ENCODE measurements at regions of chr4 and their contacts with region 1.

Region 1: DNA sequence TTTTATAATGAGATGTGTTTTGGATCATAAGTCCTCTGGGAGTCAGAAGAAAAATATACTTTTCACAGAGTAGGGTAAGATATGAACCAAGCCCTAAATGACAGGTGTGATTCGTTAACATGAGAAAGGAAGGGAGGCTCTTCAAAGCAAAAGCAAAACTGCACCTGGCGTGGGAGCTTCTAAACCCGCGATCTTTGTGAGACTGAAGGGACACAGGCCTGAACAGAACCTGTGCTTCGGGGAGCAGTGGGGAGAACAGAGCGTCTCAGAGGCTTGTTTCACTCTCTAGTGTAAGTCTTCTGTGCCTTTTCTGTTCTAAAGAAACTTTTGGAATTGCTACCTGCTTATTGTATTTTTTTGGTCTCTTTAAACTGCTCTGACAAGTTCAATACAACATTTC is 30.2 kb upstream of the CYP4V2 start:
- DNase-seq: peak in 2 of 5 donors; percentile 14 to 21
- H3K4me3 ChIP-seq: no peak overlapping the region
- H3K4me3 Mint-ChIP-seq: peak overlapping the region; percentile 28 to 79 (median 69)
- H3K27ac ChIP-seq: no peak overlapping the region
- H3K27ac Mint-ChIP-seq: peak overlapping the region in 5 of 7 donors; percentile 19 to 90 (median 84)
- H3K4me1 ChIP-seq: peaks cover 9% of the 10 kb centered on the region
- H3K4me1 Mint-ChIP-seq: peaks cover 0 to 10% (median 5%) of the 10 kb centered on the region in 4 donors
- H3K27me3 ChIP-seq: no peaks in the 10 kb centered on the region
- H3K27me3 Mint-ChIP-seq: peaks cover 0 to 4% of the 10 kb centered on the region in 2 donors

Region 2: DNA sequence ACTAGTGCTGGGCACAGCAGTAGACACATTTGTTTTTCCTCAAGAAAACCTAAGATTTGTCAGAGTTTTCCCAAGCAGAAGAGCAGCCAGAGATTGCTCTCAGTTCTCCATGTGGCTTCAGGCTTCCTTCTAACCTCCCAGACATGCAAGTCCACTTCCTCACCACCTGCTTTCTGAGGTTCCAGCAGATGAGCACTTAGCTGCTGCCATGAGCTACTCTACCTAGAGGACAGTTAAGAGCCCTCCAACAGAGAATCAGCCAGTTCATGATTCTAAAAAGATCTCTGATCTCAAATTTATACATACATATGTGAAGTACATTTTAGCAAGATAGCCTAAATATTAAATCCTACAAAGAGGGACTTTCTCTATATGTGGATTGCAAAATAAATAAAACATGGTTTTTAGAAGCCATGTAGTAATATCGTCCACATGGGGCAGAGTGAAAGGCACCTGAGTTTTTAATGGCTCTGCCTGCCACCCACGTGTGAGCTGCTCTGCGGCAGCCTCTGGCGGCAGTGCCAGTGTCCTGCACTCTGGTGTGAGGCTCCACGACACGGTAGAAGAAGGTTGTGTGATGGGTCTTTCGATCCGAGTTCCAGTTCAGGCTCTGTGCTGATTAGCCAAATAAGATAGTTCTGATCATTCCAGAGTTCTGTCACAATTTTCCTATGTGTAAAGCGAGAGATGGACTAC is 40.5 kb after region 1 on chr4:
- CTCF ChIA-PET with region 1: no interaction called
- POLR2A ChIA-PET with region 1: no interaction called
- intact Hi-C with region 1: loop called (anchors 5 kb)
- DNase-seq: peak; percentile 41 to 77 (median 53)
- H3K4me3 ChIP-seq: no peak overlapping the region
- H3K4me3 Mint-ChIP-seq: peak overlapping the region in 7 of 8 donors; percentile 2 to 65 (median 30)
- H3K27ac ChIP-seq: no peak overlapping the region
- H3K27ac Mint-ChIP-seq: peak overlapping the region; percentile 19 to 94 (median 79)
- H3K4me1 ChIP-seq: no peaks in the 10 kb centered on the region
- H3K4me1 Mint-ChIP-seq: peaks cover 16 to 52% (median 25%) of the 10 kb centered on the region in 4 donors
- H3K27me3 ChIP-seq: no peaks in the 10 kb centered on the region
- H3K27me3 Mint-ChIP-seq: no peaks in the 10 kb centered on the region

Region 3: DNA sequence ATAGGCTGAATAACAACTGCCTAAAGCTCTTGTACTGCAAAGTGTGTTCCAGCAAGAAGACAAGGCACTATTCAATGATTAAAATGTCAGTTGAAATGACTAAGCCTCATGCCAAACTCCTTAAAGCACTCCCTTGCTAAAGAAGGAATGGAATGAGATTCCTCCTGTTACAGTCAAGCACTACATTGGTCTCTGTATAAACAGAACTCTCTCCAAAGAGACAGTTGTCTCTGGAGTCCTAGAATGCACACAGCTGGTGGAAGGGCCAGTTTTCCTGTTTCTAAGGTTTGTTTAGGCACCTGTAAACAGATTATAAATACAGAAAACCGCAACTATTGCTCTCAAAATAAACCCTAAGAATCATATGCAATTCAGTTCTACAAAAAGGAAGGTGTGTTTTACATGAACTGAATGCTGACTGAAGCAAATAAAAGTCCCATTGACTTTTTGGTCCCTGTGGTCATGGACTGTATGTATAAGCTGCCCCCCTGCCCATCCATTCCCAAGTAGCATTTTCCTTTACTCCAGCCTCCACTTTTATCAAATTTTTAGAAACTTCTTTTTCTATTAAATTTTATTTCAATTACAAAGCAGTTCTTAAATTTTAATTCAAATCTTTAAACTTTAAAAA is 515.5 kb after region 1 on chr4:
- CTCF ChIA-PET with region 1: no interaction called
- POLR2A ChIA-PET with region 1: no interaction called
- intact Hi-C with region 1: no loop called
- DNase-seq: no peak
- H3K4me3 ChIP-seq: no peak overlapping the region
- H3K4me3 Mint-ChIP-seq: no peak overlapping the region
- H3K27ac ChIP-seq: no peak overlapping the region
- H3K27ac Mint-ChIP-seq: no peak overlapping the region
- H3K4me1 ChIP-seq: no peaks in the 10 kb centered on the region
- H3K4me1 Mint-ChIP-seq: no peaks in the 10 kb centered on the region
- H3K27me3 ChIP-seq: no peaks in the 10 kb centered on the region
- H3K27me3 Mint-ChIP-seq: no peaks in the 10 kb centered on the region

Measured in CD4-positive, alpha-beta memory T cell (primary cell).